ACHN (cell line): ENCODE measurements at regions of chr16 and their contacts with region 1.

Region 1: GRCh38 chr16:76639685-76640289 is 362.6 kb downstream of the CNTNAP4 start:
- DNase-seq: peak; percentile 53

Region 2: GRCh38 chr16:76278980-76279379 is 360.8 kb before region 1 on chr16:
- in situ Hi-C with region 1: loop called (anchors 25 kb)
- DNase-seq: peak; percentile 41

Region 3: GRCh38 chr16:76800196-76800595 is 160.4 kb after region 1 on chr16:
- in situ Hi-C with region 1: no loop called
- DNase-seq: no peak